AG04450 (cell line): ENCODE measurements at regions of chr11 and their contacts with region 1.

Region 1: DNA sequence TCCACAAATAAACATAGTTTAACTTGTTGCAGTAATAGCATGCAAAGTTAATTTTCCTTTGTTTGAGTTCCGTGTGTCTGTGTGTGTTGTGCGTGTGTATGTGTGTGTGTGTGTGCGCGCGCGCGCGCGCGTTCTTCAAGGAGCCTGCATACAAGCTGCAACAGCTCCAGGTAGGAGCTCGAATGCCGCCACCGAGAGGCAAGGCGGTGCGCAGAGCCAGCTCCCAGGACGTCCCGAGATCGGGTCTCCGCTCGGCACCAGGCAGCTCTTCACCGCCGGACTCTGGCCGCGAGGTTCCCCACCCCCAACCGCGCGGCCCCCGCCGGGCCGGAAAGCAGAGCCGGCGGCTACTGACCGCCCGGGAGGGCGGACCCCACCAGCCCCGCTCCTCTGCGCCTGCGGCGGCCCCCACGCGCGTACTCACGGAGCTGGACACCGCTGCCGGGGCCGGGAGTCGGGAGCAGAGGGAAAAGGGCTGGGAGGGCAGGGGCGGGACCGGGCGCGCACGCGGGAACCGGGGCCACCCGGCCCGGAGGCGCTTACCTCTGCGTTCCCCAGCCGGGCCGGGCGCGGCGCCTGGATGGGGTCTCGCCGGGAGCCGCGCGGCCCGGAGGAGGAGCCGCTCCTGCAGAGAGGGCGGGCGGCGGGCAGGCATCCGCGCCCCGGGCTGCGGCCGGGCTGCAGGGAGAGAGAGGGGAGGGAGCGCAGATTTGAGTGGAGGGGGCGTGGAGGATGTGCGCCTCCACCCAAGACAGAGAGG is 40.4 kb upstream of the AKIP1 start:
- DNase-seq: peak; percentile 29
- H3K4me3 ChIP-seq: peak overlapping the region; percentile 76
- H3K27ac ChIP-seq: peak overlapping the region; percentile 58
- H3K27me3 ChIP-seq: no peaks in the 10 kb centered on the region
- CTCF ChIP-seq: no peak

Region 2: DNA sequence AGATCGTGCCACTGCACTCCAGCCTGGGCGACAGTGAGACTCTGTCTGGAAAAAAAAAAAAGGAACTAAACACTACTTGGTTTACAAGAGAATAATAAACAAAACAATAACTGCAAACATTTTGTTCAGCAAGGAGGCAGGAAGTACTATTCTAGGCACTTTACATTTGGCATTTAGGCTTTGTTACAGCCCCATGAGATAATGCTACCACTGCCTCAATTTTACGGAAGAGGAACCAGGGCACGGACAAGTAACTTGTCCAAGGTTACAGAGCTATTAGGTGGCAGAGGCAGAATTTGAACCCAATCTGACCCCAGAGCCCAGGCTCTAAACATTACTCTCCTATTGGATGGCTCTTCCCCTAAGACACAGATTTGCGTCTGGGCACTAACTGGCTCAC is 68.3 kb before region 1 on chr11:
- CTCF ChIA-PET with region 1: no interaction called
- POLR2A ChIA-PET with region 1: interaction called, 10 read pairs
- DNase-seq: no peak
- H3K4me3 ChIP-seq: no peak overlapping the region
- H3K27ac ChIP-seq: no peak overlapping the region
- H3K27me3 ChIP-seq: no peaks in the 10 kb centered on the region
- CTCF ChIP-seq: no peak

Region 3: GRCh38 chr11:8813658-8814057 is 56.9 kb before region 1 on chr11:
- CTCF ChIA-PET with region 1: interaction called, 3 read pairs
- POLR2A ChIA-PET with region 1: interaction called, 11 read pairs
- DNase-seq: peak; percentile 74
- H3K4me3 ChIP-seq: no peak overlapping the region
- H3K27ac ChIP-seq: peak overlapping the region; percentile 39
- H3K27me3 ChIP-seq: no peaks in the 10 kb centered on the region
- CTCF ChIP-seq: peak; percentile 97

Region 4: GRCh38 chr11:8832571-8833260 is 37.9 kb before region 1 on chr11:
- CTCF ChIA-PET with region 1: interaction called, 4 read pairs
- POLR2A ChIA-PET with region 1: interaction called, 25 read pairs
- DNase-seq: peak; percentile 66
- H3K4me3 ChIP-seq: no peak overlapping the region
- H3K27ac ChIP-seq: peak overlapping the region; percentile 94
- H3K27me3 ChIP-seq: no peaks in the 10 kb centered on the region
- CTCF ChIP-seq: no peak

Region 5: DNA sequence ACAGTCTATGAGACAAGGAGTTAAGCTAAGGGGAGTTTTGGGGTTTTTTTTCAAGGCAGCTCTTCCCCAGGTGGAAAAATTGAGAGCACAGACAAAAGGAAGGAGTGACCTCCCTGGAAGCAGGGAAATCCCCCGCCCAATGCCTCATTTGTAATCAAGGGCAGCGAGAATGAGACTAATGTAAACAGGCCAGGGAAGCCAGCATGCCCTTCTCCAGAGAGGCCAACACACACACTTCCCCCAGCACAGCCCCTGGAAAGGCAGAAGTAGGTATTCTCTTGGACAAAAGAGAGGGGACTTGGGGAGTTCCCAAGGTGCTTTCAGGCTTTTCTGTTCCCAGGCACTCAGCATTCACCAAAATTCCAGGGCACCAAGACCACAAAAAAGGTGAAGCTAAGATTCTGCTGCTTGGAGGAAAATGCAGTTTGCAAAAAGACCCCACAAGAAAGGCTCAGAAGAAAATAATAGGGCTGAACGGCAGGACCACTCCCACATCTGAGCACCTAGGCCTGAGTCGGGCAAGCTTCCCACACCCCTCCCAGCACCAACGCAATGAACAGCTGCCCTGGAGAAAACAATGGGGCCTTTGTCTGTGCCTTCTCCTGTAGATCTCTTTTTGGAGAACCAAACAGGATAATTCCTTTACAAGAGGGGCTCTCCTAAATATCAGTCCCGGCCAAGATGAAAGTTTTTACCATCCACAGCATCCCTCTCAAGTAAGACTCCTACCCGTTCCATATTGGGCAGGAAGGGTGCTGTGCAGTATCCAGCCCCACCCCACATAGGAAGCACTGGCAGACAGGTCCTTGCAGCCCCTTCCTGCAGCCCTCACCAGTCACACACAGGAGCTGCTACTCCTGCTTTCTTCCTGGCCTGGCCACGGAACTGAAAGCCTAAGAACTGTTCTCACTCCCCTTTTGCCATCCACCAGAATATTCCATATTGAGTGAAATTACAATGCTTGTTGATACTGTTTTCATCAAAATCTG is 30.3 kb before region 1 on chr11:
- CTCF ChIA-PET with region 1: interaction called, 4 read pairs
- POLR2A ChIA-PET with region 1: interaction called, 11 read pairs
- DNase-seq: no peak
- H3K4me3 ChIP-seq: no peak overlapping the region
- H3K27ac ChIP-seq: peak overlapping the region; percentile 65
- H3K27me3 ChIP-seq: no peaks in the 10 kb centered on the region
- CTCF ChIP-seq: no peak

Region 6: GRCh38 chr11:8851316-8851715 is 19.3 kb before region 1 on chr11:
- CTCF ChIA-PET with region 1: interaction called, 18 read pairs
- POLR2A ChIA-PET with region 1: no interaction called
- DNase-seq: no peak
- H3K4me3 ChIP-seq: no peak overlapping the region
- H3K27ac ChIP-seq: no peak overlapping the region
- H3K27me3 ChIP-seq: no peaks in the 10 kb centered on the region
- CTCF ChIP-seq: no peak

Region 7: DNA sequence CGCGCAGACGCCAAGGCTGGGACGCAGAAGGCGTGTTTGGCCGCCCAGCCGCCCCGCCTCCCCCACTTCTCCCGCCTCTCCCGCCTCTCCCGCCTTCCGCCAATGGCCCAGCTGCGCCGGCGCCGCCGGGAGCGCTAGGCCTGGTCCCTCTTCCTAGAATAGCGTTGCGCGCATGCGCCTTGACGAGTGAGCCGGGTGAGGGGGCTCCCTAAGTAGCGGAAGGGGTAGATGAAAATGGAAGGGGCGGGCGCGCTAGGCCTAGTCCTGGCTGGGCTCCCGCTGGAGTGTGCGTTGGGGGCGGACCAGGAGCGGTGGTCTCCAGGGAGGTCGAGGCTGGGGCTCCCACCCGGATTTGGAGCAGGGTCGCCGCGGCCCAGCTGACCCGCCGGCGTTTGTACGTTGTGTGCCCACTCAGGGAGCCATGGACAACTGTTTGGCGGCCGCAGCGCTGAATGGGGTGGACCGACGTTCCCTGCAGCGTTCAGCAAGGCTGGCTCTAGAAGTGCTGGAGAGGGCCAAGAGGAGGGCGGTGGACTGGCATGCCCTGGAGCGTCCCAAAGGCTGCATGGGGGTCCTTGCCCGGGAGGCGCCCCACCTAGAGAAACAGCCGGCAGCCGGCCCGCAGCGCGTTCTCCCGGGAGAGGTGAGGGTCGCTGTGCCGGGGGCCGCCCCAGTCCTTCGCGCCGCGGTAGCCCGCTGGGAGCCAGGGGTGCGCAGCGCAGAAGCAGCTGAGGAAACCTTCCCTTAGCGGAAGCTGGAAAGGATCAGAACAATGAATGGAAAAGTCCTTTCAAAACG is 40.6 kb after region 1 on chr11 and contains the start of gene AKIP1:
- CTCF ChIA-PET with region 1: interaction called, 5 read pairs
- POLR2A ChIA-PET with region 1: interaction called, 15 read pairs
- DNase-seq: peak; percentile 87
- H3K4me3 ChIP-seq: peak within 1 kb of the TSS; percentile 89
- H3K27ac ChIP-seq: peak within 1 kb of the TSS; percentile 83
- H3K27me3 ChIP-seq: no peaks in the 10 kb centered on the region
- CTCF ChIP-seq: no peak
- polyA plus RNA-seq, gene AKIP1: 39.6 and 41.4 TPM in 2 replicates